Activated naive CD4-positive, alpha-beta T cell treated with anti-CD3 and anti-CD28 coated beads for 36 hours (primary cell): ENCODE measurements at regions of chr6 and their contacts with region 1.

Region 1: DNA sequence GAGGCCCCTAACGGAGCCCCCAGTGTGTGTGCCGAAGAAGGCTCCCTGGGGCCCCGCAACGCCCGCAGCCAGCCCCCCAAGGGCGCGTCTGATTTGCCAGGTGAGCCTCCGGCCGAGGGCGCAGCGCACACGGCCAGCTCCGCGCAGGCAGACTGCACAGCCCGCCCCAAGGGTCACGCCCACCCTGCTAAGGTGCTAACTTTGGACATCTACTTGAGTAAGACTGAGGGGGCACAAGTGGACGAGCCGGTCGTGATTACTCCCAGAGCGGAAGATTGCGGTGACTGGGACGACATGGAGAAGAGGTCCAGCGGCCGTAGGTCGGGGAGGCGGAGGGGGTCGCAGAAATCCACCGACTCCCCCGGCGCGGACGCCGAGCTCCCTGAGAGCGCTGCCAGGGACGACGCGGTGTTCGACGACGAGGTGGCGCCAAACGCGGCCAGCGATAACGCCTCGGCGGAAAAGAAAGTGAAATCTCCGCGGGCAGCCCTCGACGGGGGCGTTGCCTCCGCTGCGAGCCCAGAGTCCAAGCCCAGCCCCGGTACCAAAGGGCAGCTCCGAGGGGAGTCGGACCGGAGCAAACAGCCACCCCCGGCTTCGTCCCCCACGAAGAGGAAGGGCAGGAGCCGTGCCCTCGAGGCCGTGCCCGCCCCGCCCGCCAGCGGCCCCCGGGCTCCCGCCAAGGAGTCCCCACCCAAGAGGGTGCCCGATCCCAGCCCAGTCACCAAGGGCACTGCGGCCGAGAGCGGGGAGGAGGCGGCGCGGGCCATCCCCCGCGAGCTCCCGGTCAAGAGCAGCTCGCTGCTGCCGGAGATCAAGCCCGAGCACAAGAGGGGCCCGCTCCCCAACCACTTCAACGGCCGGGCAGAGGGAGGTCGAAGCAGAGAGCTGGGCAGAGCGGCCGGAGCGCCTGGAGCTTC is 117.0 kb downstream of the RTN4IP1 start:
- DNase-seq: peak; percentile 81
- H3K4me3 Mint-ChIP-seq: peak overlapping the region; percentile 89
- H3K27ac Mint-ChIP-seq: peak overlapping the region; percentile 87
- H3K4me1 Mint-ChIP-seq: peaks cover 49% of the 10 kb centered on the region
- H3K27me3 Mint-ChIP-seq: peaks cover 4% of the 10 kb centered on the region

Region 2: DNA sequence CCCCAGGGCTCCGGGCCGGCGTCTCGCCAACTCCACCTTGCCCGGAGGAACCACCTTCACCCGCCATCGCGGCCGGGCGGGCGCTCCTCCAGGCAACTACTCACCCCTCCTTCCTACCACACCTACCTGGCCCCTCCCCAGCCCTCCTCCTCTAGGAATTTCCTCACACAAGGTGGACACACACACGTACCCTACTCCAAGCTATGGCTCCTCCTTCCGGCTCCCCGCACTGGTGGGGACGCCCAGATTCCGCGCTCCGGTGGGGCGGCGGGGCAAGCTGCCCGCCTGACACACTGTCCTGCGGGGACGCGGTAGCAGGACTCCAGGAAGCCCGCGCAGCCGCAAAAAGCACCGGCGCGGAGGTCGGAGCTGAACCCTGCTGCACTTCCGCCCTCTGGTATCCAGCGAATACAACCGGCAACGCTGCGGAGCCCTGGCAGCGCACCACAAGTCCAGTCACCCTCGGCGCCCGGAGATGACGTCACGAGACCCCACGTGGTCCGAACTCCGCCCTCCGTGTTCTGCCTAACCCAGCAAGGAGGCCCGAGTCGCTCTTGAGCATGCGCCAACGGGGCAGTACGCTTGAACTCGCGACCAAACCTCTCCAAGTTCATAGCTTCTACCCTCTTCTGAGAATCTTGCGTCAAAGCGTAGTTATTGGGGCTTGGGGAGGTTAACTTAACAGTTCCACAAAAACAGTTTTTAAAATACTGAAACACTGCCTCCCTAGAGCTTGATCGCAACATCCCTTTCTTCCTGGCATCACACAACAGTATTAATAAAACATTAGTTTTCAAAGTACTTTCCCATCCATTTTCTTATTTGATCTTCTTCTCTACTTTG is 186.8 kb before region 1 on chr6 and contains the start of gene ATG5:
- CTCF ChIA-PET with region 1: no interaction called
- intact Hi-C with region 1: loop called (anchors 1 kb)
- DNase-seq: peak; percentile 100
- H3K4me3 Mint-ChIP-seq: peak within 1 kb of the TSS; percentile 99
- H3K27ac Mint-ChIP-seq: peak within 1 kb of the TSS; percentile 89
- H3K4me1 Mint-ChIP-seq: peaks cover 39% of the 10 kb centered on the region
- H3K27me3 Mint-ChIP-seq: no peaks in the 10 kb centered on the region
- total RNA-seq, gene ATG5: 20.2 to 20.7 TPM

Region 3: DNA sequence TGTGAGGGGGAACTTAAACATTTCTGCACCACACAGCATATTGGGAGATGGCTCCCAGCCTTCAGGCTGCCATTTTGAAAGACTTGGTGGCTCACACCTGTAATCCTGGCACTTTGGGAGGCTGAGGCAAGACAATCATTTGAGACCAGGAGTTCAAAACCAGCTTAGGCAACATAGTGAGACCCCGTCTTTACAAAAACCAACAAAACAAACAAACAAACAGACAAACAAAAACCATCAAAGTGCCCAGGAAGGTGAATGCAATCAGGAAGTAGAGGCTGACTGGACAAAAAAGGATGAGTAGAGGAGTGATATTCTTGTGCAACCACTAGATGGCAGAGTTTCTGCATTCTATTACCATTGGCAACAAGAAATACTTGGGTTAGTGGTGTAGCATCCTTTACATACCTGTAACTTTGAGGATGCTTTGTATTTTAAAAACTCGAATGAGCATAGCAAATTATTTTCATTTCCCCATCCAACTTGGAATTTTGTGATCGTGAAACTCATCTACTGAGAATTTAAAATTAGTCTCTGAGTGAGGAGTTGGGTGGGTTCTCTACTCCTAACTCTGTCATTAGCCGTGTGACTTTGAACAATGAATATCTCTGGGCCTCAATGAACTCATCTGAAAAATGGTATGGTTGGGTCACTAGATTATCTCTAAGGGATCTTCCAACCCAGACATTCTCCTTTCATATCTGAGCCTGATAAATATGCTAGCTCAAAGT is 67.4 kb before region 1 on chr6:
- CTCF ChIA-PET with region 1: interaction called, 12 read pairs
- intact Hi-C with region 1: loop called (anchors 1 kb)
- DNase-seq: peak; percentile 23
- H3K4me3 Mint-ChIP-seq: no peak overlapping the region
- H3K27ac Mint-ChIP-seq: no peak overlapping the region
- H3K4me1 Mint-ChIP-seq: peaks cover 16% of the 10 kb centered on the region
- H3K27me3 Mint-ChIP-seq: peaks cover 15% of the 10 kb centered on the region

Region 4: GRCh38 chr6:106525111-106525881 is 13.0 kb after region 1 on chr6:
- CTCF ChIA-PET with region 1: interaction called, 53 read pairs
- intact Hi-C with region 1: loop called (anchors 1 kb)
- DNase-seq: peak; percentile 24
- H3K4me3 Mint-ChIP-seq: peak overlapping the region; percentile 73
- H3K27ac Mint-ChIP-seq: peak overlapping the region; percentile 91
- H3K4me1 Mint-ChIP-seq: peaks cover 66% of the 10 kb centered on the region
- H3K27me3 Mint-ChIP-seq: no peaks in the 10 kb centered on the region

Region 5: GRCh38 chr6:106546691-106547414 is 34.5 kb after region 1 on chr6:
- CTCF ChIA-PET with region 1: interaction called, 13 read pairs
- intact Hi-C with region 1: loop called (anchors 2 kb)
- DNase-seq: peak; percentile 39
- H3K4me3 Mint-ChIP-seq: no peak overlapping the region
- H3K27ac Mint-ChIP-seq: peak overlapping the region; percentile 78
- H3K4me1 Mint-ChIP-seq: peaks cover 37% of the 10 kb centered on the region
- H3K27me3 Mint-ChIP-seq: no peaks in the 10 kb centered on the region

Region 6: GRCh38 chr6:106568530-106568929 is 56.2 kb after region 1 on chr6:
- CTCF ChIA-PET with region 1: interaction called, 24 read pairs
- intact Hi-C with region 1: no loop called
- DNase-seq: no peak
- H3K4me3 Mint-ChIP-seq: no peak overlapping the region
- H3K27ac Mint-ChIP-seq: no peak overlapping the region
- H3K4me1 Mint-ChIP-seq: peaks cover 7% of the 10 kb centered on the region
- H3K27me3 Mint-ChIP-seq: no peaks in the 10 kb centered on the region